CD4-positive, alpha-beta T cell (primary cell): ENCODE measurements at regions of chr3 and their contacts with region 1.

Region 1: GRCh38 chr3:58532794-58533220 is 4.2 kb downstream of the ACOX2 start:
- DNase-seq: peak; percentile 60 to 90 (median 70)
- ATAC-seq: peak; percentile 99
- H3K4me3 ChIP-seq: no peak overlapping the region
- H3K4me3 Mint-ChIP-seq: no peak overlapping the region
- H3K27ac ChIP-seq: no peak overlapping the region
- H3K27ac Mint-ChIP-seq: no peak overlapping the region
- H3K4me1 ChIP-seq: peaks cover 8% of the 10 kb centered on the region
- H3K4me1 Mint-ChIP-seq: peaks cover 7% of the 10 kb centered on the region
- H3K27me3 ChIP-seq: no peaks in the 10 kb centered on the region
- H3K27me3 Mint-ChIP-seq: no peaks in the 10 kb centered on the region
- CTCF ChIP-seq: peak; percentile 78

Region 2: DNA sequence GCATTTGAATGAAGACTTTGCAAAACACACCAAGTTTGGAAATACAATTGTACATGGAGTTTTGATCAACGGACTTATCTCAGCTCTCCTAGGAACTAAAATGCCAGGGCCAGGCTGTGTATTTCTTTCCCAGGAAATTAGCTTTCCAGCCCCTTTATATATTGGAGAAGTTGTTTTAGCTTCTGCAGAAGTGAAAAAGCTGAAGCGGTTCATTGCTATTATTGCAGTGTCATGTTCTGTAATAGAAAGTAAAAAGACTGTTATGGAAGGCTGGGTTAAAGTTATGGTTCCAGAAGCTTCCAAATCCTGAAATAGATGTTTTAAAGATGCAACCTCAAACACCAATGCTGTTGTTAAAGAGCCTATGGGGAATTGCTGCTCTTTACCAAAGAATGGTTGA is 215.0 kb before region 1 on chr3:
- CTCF ChIA-PET with region 1: no interaction called
- POLR2A ChIA-PET with region 1: no interaction called
- intact Hi-C with region 1: loop called in 1 of 2 experiments (anchors 1 kb)
- DNase-seq: no peak
- ATAC-seq: no peak
- H3K4me3 ChIP-seq: no peak overlapping the region
- H3K4me3 Mint-ChIP-seq: no peak overlapping the region
- H3K27ac ChIP-seq: no peak overlapping the region
- H3K27ac Mint-ChIP-seq: no peak overlapping the region
- H3K4me1 ChIP-seq: no peaks in the 10 kb centered on the region
- H3K4me1 Mint-ChIP-seq: peaks cover 16% of the 10 kb centered on the region
- H3K27me3 ChIP-seq: no peaks in the 10 kb centered on the region
- H3K27me3 Mint-ChIP-seq: no peaks in the 10 kb centered on the region
- CTCF ChIP-seq: no peak

Region 3: DNA sequence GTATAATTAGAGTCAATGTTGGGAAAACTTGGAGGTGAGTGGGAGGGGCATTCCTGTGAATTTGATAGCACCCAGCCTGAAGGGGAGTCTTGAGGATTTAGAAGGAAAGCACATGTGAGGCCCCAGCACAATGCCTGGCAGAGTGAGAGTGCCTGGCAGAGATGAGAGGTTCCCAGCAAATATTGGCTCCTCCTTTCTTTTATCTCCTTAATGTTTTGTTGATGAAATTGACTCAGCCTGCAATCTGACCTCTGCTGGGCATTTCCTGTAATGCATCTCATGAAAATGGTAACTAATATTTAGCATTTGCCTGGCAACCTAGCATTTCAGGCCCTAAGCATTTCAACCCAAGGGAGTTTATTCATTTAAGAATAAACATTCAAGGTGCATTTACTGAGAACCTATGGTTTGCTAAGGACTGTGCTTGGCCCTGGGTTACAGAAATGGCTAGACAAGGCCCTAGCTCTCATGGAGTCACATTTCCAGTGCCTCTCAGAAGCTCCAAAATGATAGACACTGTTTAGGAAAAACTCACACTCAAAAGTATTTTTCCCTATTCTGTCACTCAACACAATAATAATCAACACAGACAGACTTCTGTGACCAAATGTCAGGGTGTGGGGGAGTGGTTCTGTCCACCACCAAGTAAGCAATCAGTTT is 118.1 kb before region 1 on chr3:
- CTCF ChIA-PET with region 1: no interaction called
- POLR2A ChIA-PET with region 1: no interaction called
- intact Hi-C with region 1: loop called in 1 of 2 experiments (anchors 2 kb)
- DNase-seq: peak in 13 of 14 experiments; percentile 8 to 76 (median 21)
- ATAC-seq: peak; percentile 88
- H3K4me3 ChIP-seq: no peak overlapping the region
- H3K4me3 Mint-ChIP-seq: no peak overlapping the region
- H3K27ac ChIP-seq: no peak overlapping the region
- H3K27ac Mint-ChIP-seq: no peak overlapping the region
- H3K4me1 ChIP-seq: no peaks in the 10 kb centered on the region
- H3K4me1 Mint-ChIP-seq: no peaks in the 10 kb centered on the region
- H3K27me3 ChIP-seq: no peaks in the 10 kb centered on the region
- H3K27me3 Mint-ChIP-seq: no peaks in the 10 kb centered on the region
- CTCF ChIP-seq: peak; percentile 75

Region 4: GRCh38 chr3:58433400-58434169 is 99.2 kb before region 1 on chr3 and contains the start of gene PDHB:
- CTCF ChIA-PET with region 1: no interaction called
- POLR2A ChIA-PET with region 1: no interaction called
- intact Hi-C with region 1: loop called in 1 of 2 experiments (anchors 1 kb)
- DNase-seq: peak; percentile 77 to 94 (median 86)
- ATAC-seq: peak; percentile 96
- H3K4me3 ChIP-seq: peak within 1 kb of the TSS; percentile 93
- H3K4me3 Mint-ChIP-seq: peak within 1 kb of the TSS; percentile 90
- H3K27ac ChIP-seq: peak within 1 kb of the TSS; percentile 79 to 85
- H3K27ac Mint-ChIP-seq: peak within 1 kb of the TSS; percentile 86
- H3K4me1 ChIP-seq: peaks cover 20% of the 10 kb centered on the region
- H3K4me1 Mint-ChIP-seq: peaks cover 33% of the 10 kb centered on the region
- H3K27me3 ChIP-seq: no peaks in the 10 kb centered on the region
- H3K27me3 Mint-ChIP-seq: no peaks in the 10 kb centered on the region
- CTCF ChIP-seq: no peak
- total RNA-seq, gene PDHB: 31.1 to 31.5 TPM

Region 5: DNA sequence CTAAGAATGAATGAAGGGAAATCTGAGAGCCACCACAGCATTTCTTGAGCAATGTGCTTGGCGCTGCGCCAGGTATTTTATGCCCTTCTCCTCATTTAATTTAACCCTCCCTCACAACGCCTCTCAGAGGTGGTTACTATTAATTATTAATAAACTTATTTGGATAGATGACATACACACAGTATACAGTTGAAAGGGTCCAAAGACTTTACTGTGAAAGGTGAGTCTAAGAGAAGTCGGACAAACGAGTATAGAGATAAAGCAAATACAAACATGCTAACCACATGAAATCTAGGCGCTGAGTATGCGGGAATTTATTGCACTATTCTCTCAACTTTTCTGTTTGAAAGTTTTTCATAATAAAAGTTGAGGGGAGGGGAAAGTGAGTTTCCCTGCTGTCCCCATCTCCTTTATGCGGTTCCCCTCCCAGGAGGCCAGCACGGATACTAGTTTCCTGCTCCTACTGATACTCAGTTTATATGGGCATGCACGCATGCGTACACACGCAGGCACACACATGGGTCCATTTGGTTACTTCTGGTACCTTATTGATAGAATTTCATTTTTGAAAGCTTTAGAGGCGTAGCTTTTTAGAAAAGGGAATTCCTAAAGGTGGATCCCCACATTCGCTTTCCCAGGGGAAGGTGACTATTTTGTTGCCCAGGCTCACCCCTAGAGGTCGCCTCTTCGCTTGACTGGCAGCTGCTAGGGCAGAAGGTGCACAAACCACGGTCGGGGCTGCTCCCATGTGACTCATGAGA is 69.4 kb before region 1 on chr3:
- CTCF ChIA-PET with region 1: no interaction called
- POLR2A ChIA-PET with region 1: no interaction called
- intact Hi-C with region 1: loop called (anchors 1 kb)
- DNase-seq: peak; percentile 24 to 82 (median 62)
- ATAC-seq: peak; percentile 88
- H3K4me3 ChIP-seq: peak overlapping the region; percentile 1
- H3K4me3 Mint-ChIP-seq: peak overlapping the region; percentile 5
- H3K27ac ChIP-seq: no peak overlapping the region
- H3K27ac Mint-ChIP-seq: no peak overlapping the region
- H3K4me1 ChIP-seq: peaks cover 7% of the 10 kb centered on the region
- H3K4me1 Mint-ChIP-seq: peaks cover 8% of the 10 kb centered on the region
- H3K27me3 ChIP-seq: no peaks in the 10 kb centered on the region
- H3K27me3 Mint-ChIP-seq: no peaks in the 10 kb centered on the region
- CTCF ChIP-seq: peak; percentile 88

Region 6: DNA sequence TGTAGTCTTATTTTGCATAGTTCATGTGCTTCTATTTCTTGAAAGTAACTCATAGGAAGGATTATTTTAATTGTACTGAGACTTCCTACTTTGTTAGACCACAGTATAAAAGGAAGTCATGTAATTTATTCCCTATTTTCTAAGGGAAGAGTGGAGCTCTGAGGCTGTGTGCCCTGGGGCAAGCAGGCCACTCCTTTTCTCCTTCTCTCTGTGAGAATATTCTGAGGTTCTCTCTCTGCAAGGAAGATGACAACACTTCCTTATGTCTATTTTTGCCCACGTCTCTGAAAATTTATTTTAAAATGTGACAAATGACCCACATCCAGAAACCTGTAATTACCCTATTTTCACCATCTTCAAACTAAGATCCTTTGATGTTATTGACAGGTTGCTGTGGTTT is 29.9 kb before region 1 on chr3:
- CTCF ChIA-PET with region 1: no interaction called
- POLR2A ChIA-PET with region 1: no interaction called
- intact Hi-C with region 1: no loop called
- DNase-seq: no peak
- ATAC-seq: no peak
- H3K4me3 ChIP-seq: no peak overlapping the region
- H3K4me3 Mint-ChIP-seq: no peak overlapping the region
- H3K27ac ChIP-seq: no peak overlapping the region
- H3K27ac Mint-ChIP-seq: no peak overlapping the region
- H3K4me1 ChIP-seq: no peaks in the 10 kb centered on the region
- H3K4me1 Mint-ChIP-seq: peaks cover 19% of the 10 kb centered on the region
- H3K27me3 ChIP-seq: no peaks in the 10 kb centered on the region
- H3K27me3 Mint-ChIP-seq: no peaks in the 10 kb centered on the region
- CTCF ChIP-seq: no peak

Region 7: DNA sequence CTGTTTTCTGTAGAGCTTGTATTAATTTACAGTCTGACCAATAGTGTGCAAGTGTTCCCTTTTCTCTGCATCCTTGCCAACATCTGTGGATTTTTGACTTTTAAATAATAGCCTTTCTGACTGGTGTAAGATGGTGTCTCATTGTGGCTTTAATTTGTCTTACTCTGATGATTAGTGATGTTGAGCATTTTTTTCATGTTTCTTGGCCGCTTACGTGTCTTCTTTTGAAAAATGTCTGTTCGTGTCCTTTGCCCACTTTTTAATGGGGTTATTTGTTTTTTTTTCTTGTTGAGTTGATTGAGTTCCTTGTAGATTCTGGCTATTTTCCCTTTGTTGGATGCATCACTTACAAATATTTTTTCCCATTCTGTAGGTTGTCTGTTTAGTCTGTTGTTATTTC is 11.7 kb after region 1 on chr3:
- CTCF ChIA-PET with region 1: no interaction called
- POLR2A ChIA-PET with region 1: no interaction called
- intact Hi-C with region 1: no loop called
- DNase-seq: no peak
- ATAC-seq: no peak
- H3K4me3 ChIP-seq: no peak overlapping the region
- H3K4me3 Mint-ChIP-seq: no peak overlapping the region
- H3K27ac ChIP-seq: no peak overlapping the region
- H3K27ac Mint-ChIP-seq: no peak overlapping the region
- H3K4me1 ChIP-seq: no peaks in the 10 kb centered on the region
- H3K4me1 Mint-ChIP-seq: no peaks in the 10 kb centered on the region
- H3K27me3 ChIP-seq: no peaks in the 10 kb centered on the region
- H3K27me3 Mint-ChIP-seq: peaks cover 11% of the 10 kb centered on the region
- CTCF ChIP-seq: no peak

Region 8: GRCh38 chr3:58588030-58588614 is 55.3 kb after region 1 on chr3:
- CTCF ChIA-PET with region 1: no interaction called
- POLR2A ChIA-PET with region 1: no interaction called
- intact Hi-C with region 1: no loop called
- DNase-seq: no peak
- ATAC-seq: no peak
- H3K4me3 ChIP-seq: no peak overlapping the region
- H3K4me3 Mint-ChIP-seq: no peak overlapping the region
- H3K27ac ChIP-seq: no peak overlapping the region
- H3K27ac Mint-ChIP-seq: no peak overlapping the region
- H3K4me1 ChIP-seq: peaks cover 9% of the 10 kb centered on the region
- H3K4me1 Mint-ChIP-seq: peaks cover 18% of the 10 kb centered on the region
- H3K27me3 ChIP-seq: peaks cover 36 to 38% of the 10 kb centered on the region in 2 experiments
- H3K27me3 Mint-ChIP-seq: peaks cover 55% of the 10 kb centered on the region
- CTCF ChIP-seq: no peak

Region 9: DNA sequence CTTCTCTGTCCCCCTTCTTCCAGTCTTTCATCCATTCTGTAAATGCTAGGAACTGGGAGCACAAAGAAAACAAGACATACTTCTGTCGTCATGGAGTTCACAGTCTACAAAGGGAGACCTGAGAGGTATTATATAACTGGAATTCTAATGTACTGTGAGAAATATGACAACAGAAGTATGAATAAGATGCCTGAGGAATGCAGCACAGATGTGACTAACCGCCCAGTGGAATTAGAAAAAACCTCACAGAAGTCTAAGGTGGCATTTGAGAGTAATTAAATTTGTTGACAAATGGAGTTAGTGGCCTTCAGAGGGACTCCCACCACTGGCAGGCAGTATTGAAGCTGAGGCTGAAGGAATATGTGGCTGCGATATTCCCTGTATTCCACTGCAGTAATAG is 302.3 kb after region 1 on chr3:
- CTCF ChIA-PET with region 1: no interaction called
- POLR2A ChIA-PET with region 1: no interaction called
- intact Hi-C with region 1: no loop called
- DNase-seq: no peak
- ATAC-seq: no peak
- H3K4me3 ChIP-seq: no peak overlapping the region
- H3K4me3 Mint-ChIP-seq: no peak overlapping the region
- H3K27ac ChIP-seq: no peak overlapping the region
- H3K27ac Mint-ChIP-seq: no peak overlapping the region
- H3K4me1 ChIP-seq: no peaks in the 10 kb centered on the region
- H3K4me1 Mint-ChIP-seq: no peaks in the 10 kb centered on the region
- H3K27me3 ChIP-seq: no peaks in the 10 kb centered on the region
- H3K27me3 Mint-ChIP-seq: peaks cover 6% of the 10 kb centered on the region
- CTCF ChIP-seq: no peak